PC-3 (cell line): ENCODE measurements at regions of chr5 and their contacts with region 1.

Region 1: GRCh38 chr5:151239237-151239861 is 13.6 kb upstream of the GM2A start:
- DNase-seq: peak; percentile 77
- ATAC-seq: peak; percentile 93
- H3K4me3 ChIP-seq: no peak overlapping the region
- H3K27ac ChIP-seq: no peak overlapping the region
- H3K4me1 ChIP-seq: peaks cover 5% of the 10 kb centered on the region
- H3K27me3 ChIP-seq: no peaks in the 10 kb centered on the region
- CTCF ChIP-seq: peak; percentile 94

Region 2: DNA sequence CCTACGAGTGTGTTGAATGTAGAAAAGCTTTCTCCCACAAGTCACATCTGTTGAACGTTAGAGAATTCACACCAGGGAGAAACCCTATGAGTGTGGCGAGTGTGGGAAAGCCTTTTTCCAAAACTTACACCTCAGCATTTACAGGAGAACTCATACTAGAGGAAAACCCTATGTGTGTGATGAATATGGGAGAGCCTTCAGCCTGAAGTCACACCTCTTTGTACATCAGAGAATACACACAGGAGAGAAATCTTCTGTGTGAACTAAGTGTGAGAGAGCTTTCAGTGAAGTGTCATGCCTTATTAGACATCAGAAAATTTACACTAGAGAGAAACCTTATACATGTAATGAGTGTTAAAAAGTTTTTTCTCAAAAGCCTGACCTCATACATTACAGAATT is 260.8 kb before region 1 on chr5:
- CTCF ChIA-PET with region 1: no interaction called
- POLR2A ChIA-PET with region 1: interaction called, 12 read pairs
- intact Hi-C with region 1: no loop called
- DNase-seq: no peak
- ATAC-seq: no peak
- H3K4me3 ChIP-seq: no peak overlapping the region
- H3K27ac ChIP-seq: no peak overlapping the region
- H3K4me1 ChIP-seq: no peaks in the 10 kb centered on the region
- H3K27me3 ChIP-seq: no peaks in the 10 kb centered on the region
- CTCF ChIP-seq: no peak

Region 3: DNA sequence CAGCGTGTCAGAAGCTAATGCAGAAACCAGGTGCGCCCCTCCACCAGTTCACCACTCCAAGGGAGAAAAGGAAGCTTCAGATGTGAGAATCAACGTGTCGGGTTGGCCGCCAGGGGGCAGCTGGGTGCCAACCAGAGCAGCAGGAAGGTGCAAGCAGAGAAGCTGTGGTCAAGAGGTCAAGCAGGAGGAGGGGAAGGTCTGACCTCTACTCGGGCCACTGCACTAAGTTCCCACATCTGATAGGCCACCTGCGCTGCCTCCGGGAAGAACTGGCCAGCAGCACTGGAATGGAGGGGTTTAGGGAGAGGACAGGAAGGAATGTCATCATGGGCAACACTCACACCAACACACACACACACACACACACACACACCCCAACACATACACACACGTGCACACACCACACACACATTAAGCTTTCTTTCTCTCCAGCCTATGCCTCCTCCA is 113.1 kb before region 1 on chr5:
- CTCF ChIA-PET with region 1: interaction called, 20 read pairs
- POLR2A ChIA-PET with region 1: no interaction called
- intact Hi-C with region 1: loop called (anchors 1 kb)
- DNase-seq: peak; percentile 64
- ATAC-seq: peak; percentile 70
- H3K4me3 ChIP-seq: no peak overlapping the region
- H3K27ac ChIP-seq: no peak overlapping the region
- H3K4me1 ChIP-seq: no peaks in the 10 kb centered on the region
- H3K27me3 ChIP-seq: no peaks in the 10 kb centered on the region
- CTCF ChIP-seq: peak; percentile 91

Region 4: DNA sequence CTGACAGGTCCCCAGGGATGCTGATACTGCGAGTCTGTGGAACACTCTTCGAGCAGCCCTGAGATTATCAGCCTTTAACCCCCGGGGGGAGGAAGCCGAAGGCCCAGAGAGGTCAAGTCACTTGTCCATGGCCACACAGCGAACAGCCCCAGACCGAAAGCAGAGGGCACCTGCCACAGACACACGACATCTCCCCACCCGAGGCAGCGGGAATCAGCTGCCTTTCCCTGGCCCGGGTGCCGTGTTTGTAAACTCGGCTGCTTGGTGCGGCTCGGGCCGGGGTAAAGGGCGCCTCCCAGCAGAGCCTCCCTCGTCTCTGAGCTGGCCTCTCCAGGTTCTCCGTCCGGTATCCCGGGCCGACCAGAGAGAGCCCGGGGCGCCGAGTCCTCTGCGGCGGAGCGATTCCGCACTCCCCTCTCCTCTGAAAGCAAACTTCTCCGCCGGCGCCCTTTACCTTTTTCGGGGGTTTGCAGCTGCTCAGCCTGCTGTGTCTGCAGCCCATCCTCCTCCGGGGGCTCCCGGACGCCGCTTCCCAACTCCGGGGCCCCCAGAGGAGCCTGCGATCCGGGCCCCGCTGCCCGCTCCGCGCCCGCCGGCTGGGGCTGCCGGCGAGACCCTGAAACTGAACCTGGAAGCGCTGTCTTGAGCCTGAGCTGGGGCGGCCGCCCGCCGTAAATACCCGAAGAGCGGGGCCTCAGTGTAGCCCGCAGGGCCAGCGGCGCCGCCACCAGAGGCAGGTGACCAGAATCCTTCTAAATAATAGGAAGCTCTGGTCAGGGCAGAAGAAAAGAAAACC is 15.7 kb before region 1 on chr5 and contains the start of gene CCDC69:
- CTCF ChIA-PET with region 1: interaction called, 3 read pairs
- POLR2A ChIA-PET with region 1: no interaction called
- intact Hi-C with region 1: loop called (anchors 1 kb)
- DNase-seq: peak; percentile 77
- ATAC-seq: peak; percentile 89
- H3K4me3 ChIP-seq: peak within 1 kb of the TSS; percentile 92
- H3K27ac ChIP-seq: no peak within 1 kb of the TSS
- H3K4me1 ChIP-seq: peaks cover 19% of the 10 kb centered on the region; the same call in 1 of the 2 replicates
- H3K27me3 ChIP-seq: no peaks in the 10 kb centered on the region
- CTCF ChIP-seq: 0 out of 2 replicates have a peak, but pooled peaks have one; percentile 13
- total RNA-seq, gene CCDC69: 19.2 and 26.4 TPM in 2 replicates

Region 5: GRCh38 chr5:151252762-151253604 is 13.6 kb after region 1 on chr5 and contains the start of gene GM2A:
- CTCF ChIA-PET with region 1: interaction called, 12 read pairs
- POLR2A ChIA-PET with region 1: interaction called, 3 read pairs
- intact Hi-C with region 1: no loop called
- DNase-seq: peak; percentile 99
- ATAC-seq: peak; percentile 94
- H3K4me3 ChIP-seq: peak within 1 kb of the TSS; percentile 95
- H3K27ac ChIP-seq: peak within 1 kb of the TSS; percentile 25
- H3K4me1 ChIP-seq: peaks cover 32% of the 10 kb centered on the region
- H3K27me3 ChIP-seq: no peaks in the 10 kb centered on the region
- CTCF ChIP-seq: no peak
- total RNA-seq, gene GM2A: 78.3 and 90.2 TPM in 2 replicates

Region 6: GRCh38 chr5:152016421-152016820 is 777.1 kb after region 1 on chr5:
- CTCF ChIA-PET with region 1: no interaction called
- POLR2A ChIA-PET with region 1: no interaction called
- intact Hi-C with region 1: no loop called
- DNase-seq: no peak
- ATAC-seq: no peak
- H3K4me3 ChIP-seq: no peak overlapping the region
- H3K27ac ChIP-seq: no peak overlapping the region
- H3K4me1 ChIP-seq: no peaks in the 10 kb centered on the region
- H3K27me3 ChIP-seq: peaks cover 30% of the 10 kb centered on the region
- CTCF ChIP-seq: no peak